GM12878 (cell line): ENCODE measurements at regions of chr3 and their contacts with region 1.

Region 1: GRCh38 chr3:114351123-114351821 is 57.4 kb downstream of the TIGIT start:
- DNase-seq: no peak
- ATAC-seq: no peak
- H3K4me3 ChIP-seq: no peak overlapping the region
- H3K27ac ChIP-seq: no peak overlapping the region
- H3K4me1 ChIP-seq: no peaks in the 10 kb centered on the region
- H3K27me3 ChIP-seq: no peaks in the 10 kb centered on the region
- CTCF ChIP-seq: no peak
- EP300 ChIP-seq: no peak
- POLR2A ChIP-seq: no peak
- RAD21 ChIP-seq: no peak

Region 2: DNA sequence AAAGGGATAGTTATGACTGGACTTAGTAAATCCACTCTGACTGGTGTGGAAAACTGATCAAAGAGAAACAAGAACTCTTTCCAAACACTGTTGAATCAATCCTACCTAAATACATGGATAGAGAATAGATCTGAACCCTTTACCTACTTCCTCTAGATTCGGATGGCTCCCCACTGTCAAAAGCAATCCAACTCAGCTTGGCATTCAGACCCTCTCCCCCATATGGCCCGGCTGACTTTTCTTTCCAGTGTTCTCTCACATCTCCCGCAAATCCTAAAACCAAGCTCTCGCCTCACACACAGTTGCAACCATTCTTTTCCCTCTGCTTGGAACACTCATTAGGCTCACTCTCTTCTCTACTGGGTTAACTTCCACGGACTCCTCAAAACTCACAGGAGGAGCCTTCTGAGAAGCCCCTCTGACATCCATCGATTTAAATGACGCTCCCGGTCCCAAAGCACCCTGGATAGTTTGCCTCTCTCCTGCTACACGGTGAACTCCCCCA is 837.0 kb before region 1 on chr3:
- CTCF ChIA-PET with region 1: no interaction called
- POLR2A ChIA-PET with region 1: no interaction called
- RAD21 ChIA-PET with region 1: no interaction called
- SMC1A ChIA-PET with region 1: no interaction called
- in situ Hi-C with region 1: no loop called
- intact Hi-C with region 1: no loop called
- DNase-seq: no peak
- ATAC-seq: peak; percentile 9
- H3K4me3 ChIP-seq: peak overlapping the region; percentile 87
- H3K27ac ChIP-seq: peak overlapping the region; percentile 76
- H3K4me1 ChIP-seq: peaks cover 12% of the 10 kb centered on the region
- H3K27me3 ChIP-seq: no peaks in the 10 kb centered on the region
- CTCF ChIP-seq: no peak
- EP300 ChIP-seq: 0 out of 4 replicates have a peak, but pooled peaks of 1 of the 2 experiments have one; percentile 35
- POLR2A ChIP-seq: no peak
- RAD21 ChIP-seq: no peak

Region 3: DNA sequence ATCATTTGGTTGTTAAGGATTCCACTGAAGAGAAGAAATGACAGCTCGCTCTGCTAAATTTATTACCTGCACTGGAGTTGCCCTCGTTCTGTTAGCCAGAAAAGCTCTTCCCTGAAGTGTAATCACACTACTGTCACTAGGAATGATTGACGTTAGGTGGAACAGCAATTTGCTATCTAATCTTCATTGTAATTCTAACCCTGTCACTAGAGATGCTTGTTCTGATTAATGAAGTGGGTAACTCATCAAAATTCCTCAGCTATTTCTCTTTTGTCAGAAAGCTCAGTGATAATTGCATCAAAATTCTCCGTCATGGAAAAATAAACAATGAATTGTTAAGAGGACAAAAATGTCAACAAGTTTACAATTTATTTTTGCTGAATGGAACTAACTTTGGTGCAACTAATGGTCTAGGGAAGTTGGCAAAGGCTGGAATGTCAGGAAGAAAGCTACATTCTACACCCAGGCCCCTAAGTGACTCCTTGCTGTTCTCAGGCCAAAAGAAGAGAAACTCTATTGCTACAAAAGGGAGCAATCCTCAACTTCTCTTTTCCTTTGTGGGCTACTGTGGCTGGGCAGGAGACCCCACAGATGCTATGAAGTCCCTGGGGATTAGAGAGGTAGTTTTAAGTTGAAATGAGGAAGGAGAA is 329.0 kb before region 1 on chr3:
- CTCF ChIA-PET with region 1: no interaction called
- POLR2A ChIA-PET with region 1: no interaction called
- RAD21 ChIA-PET with region 1: no interaction called
- SMC1A ChIA-PET with region 1: no interaction called
- in situ Hi-C with region 1: no loop called
- intact Hi-C with region 1: no loop called
- DNase-seq: no peak
- ATAC-seq: no peak
- H3K4me3 ChIP-seq: no peak overlapping the region
- H3K27ac ChIP-seq: no peak overlapping the region
- H3K4me1 ChIP-seq: no peaks in the 10 kb centered on the region
- H3K27me3 ChIP-seq: no peaks in the 10 kb centered on the region
- CTCF ChIP-seq: no peak
- EP300 ChIP-seq: no peak
- POLR2A ChIP-seq: no peak
- RAD21 ChIP-seq: no peak

Region 4: DNA sequence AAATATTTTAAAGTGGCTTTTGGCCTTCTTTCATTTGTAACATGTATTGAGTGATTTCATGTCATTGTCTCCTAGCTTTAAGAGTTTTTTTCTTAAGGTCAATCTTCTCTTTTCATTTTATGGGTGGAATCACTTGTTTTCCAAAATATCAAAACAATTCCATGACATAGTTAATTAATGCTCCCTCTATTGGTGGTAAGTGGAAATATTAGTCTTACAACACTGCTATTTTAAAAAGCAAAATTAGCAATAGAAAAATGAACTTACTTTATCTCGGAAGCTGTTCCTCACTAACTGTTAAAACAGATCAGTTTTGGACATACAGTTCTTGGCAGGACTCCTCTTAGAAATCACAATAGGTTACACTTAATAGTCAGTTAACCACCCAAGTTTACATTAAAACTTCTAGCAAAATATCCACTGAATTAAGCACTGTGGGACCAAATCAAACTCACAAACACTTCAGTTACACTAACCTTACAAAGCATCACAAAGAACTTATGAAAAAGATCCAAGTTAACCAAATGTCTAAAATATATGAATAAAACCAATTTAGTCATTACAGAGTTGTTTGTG is 15.1 kb before region 1 on chr3:
- CTCF ChIA-PET with region 1: interaction called, 11 read pairs
- POLR2A ChIA-PET with region 1: no interaction called
- RAD21 ChIA-PET with region 1: no interaction called
- SMC1A ChIA-PET with region 1: interaction called, 4 read pairs
- in situ Hi-C with region 1: no loop called
- intact Hi-C with region 1: no loop called
- DNase-seq: no peak
- ATAC-seq: no peak
- H3K4me3 ChIP-seq: no peak overlapping the region
- H3K27ac ChIP-seq: no peak overlapping the region
- H3K4me1 ChIP-seq: peaks cover 14% of the 10 kb centered on the region; the same call in 1 of the 2 replicates
- H3K27me3 ChIP-seq: no peaks in the 10 kb centered on the region
- CTCF ChIP-seq: peak; percentile 19 to 33 (median 30); a peak in 4 of 6 replicates
- EP300 ChIP-seq: no peak
- POLR2A ChIP-seq: no peak
- RAD21 ChIP-seq: 0 out of 2 replicates have a peak, but pooled peaks have one; percentile 11